Stomach (tissue), 19 donors: ENCODE measurements at regions of chr10 and their contacts with region 1.

Region 1: DNA sequence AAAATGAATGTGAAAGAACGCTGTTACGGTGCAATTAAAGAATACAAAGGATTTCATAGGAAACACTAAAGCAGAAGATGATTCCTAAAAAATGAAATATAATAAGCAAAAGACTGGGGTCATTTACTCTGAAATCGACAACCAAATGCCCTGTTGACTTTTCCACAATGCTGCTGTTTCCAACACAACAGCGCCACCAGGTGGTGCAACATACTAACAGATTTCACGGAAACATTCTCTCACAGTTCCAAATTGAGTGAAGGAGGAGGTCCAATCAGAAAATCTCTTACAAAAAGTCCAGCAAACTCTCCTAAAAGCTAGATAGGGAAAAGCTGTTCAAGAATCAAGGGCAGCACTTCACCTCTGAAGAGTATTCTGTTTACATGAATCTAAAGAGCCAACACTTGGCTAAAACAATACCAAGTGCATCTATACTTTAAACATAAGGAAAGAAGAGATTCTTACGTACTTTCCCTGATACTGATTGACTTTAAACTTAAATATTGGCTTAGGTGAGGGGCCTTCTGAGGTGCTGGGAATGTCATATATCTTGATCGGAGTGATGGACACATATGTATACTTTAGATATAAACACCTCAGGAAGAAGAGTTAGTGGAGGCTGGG is 55.9 kb downstream of the UPF2 start:
- DNase-seq: peak; percentile 84 to 94
- H3K4me3 ChIP-seq: no peak overlapping the region
- H3K27ac ChIP-seq: no peak overlapping the region
- H3K4me1 ChIP-seq: peaks cover 3 to 11% (median 7%) of the 10 kb centered on the region in 4 donors
- H3K27me3 ChIP-seq: no peaks in the 10 kb centered on the region
- CTCF ChIP-seq: peak in 5 of 7 experiments; percentile 60 to 86 (median 85)
- EP300 ChIP-seq: no peak
- POLR2A ChIP-seq: no peak

Region 2: DNA sequence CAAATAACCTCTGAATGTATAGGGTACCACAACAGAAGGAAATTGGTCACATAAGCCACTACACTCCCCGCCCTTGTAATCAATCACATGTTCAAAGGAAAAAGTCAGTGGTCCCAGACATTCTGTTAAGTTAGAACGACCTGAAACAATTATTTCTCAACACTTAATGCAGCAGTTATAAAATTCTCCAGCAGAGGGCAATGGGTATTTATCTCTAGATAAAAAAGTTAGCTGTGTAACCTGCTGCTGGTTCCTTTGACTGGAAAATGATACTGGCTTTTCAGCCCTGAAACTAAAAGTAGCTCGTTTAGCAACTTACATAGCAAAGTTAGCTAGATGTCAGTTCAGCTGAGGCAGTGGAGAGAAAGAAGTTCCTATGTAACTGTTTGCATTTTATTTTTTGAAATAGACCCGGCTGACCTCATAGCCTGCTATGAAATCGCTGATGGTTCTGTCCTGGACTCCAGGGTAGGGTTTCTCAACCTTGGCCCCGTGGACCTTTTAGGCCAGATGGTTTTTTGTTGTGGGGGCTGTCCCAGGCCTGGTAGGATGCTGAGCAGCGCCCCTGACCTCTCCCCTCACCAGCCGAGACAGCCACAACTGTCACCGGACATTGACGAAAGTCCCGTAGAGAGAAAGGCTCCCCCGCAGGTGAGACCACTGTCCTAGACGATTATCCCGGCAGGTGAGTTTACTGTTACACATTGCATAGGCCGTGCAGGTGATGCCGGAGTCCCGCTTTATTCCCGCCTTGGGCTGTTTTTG is 203.7 kb before region 1 on chr10:
- intact Hi-C with region 1: loop called (anchors 10 kb)
- DNase-seq: peak in 1 of 2 donors; percentile 83
- H3K4me3 ChIP-seq: no peak overlapping the region
- H3K27ac ChIP-seq: no peak overlapping the region
- H3K4me1 ChIP-seq: no peaks in the 10 kb centered on the region
- H3K27me3 ChIP-seq: peaks cover 0 to 6% (median 0%) of the 10 kb centered on the region in 3 donors
- CTCF ChIP-seq: peak in 5 of 7 experiments; percentile 21 to 73 (median 68)
- EP300 ChIP-seq: no peak
- POLR2A ChIP-seq: no peak